Posterior cingulate gyrus (tissue), 11 donors: ENCODE measurements at regions of chr17 and their contacts with region 1.

Region 1: DNA sequence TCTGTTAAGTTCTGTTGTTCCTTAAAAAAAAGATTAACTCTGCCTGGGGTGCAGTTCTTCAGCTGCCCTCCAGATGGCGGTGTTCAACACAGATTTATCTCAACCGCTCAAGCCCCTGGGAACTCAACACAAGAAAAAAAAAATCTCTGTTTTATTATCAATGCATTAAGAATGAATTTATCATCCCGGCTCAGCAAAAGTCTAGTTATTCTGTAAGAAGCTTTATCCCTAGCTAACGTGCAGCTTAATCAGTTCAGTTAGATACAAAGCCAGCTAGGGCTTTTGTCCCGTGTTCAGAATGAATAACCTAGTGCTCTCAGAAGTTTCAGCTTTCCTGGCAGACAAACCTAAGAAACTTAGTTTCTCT is 475.9 kb upstream of the CCL2 start:
- DNase-seq: peak; percentile 28 to 91 (median 52)

Region 2: DNA sequence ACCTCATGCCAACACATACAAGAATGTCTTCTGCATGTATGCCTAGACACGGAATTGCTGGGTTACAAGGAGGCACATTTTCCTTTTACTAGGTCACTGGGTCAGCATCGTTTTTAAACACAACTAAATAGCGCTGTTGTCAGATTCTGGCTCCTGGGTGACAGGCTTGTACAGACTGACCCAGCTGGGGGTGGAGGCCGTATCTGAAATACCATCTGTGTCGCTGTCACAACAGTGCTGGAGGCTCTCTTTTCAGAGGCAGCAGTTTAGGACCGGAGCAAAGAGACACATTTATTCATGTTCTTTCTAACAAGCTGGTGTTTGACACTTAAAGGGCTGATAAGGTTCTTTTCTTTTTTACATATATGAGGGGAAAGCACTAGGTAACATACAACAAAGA is 83.1 kb before region 1 on chr17:
- intact Hi-C with region 1: no loop called
- DNase-seq: no peak

Region 3: DNA sequence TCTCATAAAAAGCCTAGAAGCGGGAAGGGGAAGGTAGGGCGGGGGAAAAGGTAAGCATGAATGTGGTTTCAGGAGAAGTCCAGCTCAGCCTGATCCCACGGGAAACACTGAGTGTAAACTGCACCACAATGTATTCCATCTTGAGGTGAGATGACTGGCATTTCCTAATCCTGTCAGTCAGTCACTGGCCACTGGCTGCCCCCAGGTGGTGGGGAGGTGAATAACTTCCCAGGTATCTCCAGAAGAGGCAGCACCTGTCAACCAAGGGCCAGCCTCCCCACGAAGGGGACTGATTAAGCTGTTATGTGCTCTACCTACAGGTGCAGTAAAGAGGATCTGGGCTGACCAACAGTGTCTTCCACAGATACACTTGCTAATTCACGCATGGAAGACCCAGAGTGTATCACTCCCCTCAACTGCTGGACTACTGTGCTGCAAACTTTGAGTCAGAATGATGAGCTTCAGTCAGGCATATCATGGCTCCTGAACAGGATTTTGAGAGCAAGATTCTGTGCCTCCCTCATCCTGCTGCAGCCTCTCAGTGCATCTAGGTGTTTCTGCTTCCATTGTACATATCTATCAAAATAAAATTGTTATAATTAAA is 367.3 kb after region 1 on chr17:
- intact Hi-C with region 1: loop called (anchors 5 kb)
- DNase-seq: peak in 8 of 10 donors; percentile 41 to 89 (median 50)

Region 4: GRCh38 chr17:34163646-34164045 is 384.4 kb after region 1 on chr17:
- intact Hi-C with region 1: loop called (anchors 1 kb)
- DNase-seq: peak in 4 of 10 donors; percentile 11 to 81 (median 34)